ENCODE measurements at regions of chr16 and their contacts with region 1.

Region 1: DNA sequence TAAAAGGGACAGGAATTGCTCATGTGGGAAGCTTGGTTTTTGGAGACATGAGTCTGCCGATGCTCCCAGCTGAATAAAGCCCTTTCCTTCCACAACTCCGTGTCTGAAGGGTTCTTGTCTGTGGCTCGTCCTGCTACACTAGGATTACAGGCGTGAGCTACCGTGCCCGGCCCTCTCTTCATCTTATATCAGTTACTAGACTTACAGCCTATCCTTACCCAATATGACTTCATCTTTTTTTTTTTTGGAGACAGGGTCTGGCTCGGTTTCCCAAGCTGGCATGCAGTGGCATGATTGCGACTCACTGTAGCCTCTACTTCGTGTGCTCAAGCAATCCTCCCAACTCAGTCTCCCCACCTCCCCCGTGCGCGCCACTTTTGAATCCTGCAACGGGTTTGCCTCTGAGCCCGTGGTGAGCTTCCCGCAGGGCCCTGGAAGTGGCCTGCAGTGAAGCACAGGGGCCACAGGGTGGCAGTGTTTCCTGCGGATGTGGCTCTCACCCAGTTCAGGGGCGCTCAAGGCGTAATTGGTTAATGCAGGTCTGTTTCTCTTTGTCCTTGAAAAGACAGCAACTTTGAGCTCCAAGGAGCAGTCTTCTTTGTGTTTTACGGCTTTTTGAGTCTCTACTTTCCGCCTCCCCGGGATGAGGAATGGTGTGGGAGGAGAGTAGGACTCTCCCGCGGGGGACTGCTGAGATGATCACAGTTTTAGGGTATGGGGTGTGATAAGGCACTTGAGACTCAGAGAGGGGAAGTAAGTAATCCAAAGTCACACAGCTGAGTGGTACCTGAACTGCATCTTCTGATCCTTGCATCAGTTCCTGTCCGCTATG is 22.7 kb upstream of the GPRC5B start:
- DNase-seq: peak; percentile 70
- ATAC-seq: peak; percentile 95

Region 2: DNA sequence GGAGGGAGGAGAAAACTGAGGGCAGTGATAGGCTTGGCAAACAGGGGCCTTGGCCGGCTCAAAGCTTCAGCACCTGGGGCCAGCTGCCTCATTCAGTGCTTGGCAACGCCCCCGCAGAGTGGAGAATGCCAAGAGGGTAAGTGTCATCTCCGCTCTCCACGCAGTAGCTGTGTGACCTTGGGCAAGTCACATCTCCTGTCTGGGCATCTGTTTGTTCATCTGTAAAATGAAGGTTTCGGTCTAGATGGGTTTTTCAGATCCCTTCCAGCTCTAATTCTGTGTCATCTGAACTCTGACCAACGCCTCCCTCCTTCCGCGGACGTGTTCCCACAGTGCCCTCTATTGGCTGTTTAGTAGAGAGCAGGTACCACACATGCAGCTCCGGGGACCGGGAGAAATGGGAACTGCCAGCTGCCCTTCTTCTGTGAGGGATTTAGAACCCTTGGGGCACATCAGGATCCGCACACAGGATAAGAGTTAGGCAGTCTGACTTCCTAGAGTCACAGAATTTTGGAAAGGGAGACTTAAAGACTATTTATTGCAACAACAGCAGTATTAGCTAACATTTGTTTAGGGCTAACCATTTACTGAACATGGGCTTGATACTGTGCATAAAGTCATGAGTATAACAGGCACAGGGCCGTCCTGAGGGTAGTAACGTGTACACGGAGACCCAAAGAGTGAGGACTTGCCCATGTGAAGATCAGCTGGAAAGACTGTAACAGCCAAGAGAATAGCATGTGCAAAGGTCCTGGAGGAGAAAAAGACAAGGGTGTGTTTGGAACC is 393.1 kb after region 1 on chr16:
- intact Hi-C with region 1: loop called (anchors 5 kb)
- DNase-seq: peak; percentile 50
- ATAC-seq: peak; percentile 55

Region 3: DNA sequence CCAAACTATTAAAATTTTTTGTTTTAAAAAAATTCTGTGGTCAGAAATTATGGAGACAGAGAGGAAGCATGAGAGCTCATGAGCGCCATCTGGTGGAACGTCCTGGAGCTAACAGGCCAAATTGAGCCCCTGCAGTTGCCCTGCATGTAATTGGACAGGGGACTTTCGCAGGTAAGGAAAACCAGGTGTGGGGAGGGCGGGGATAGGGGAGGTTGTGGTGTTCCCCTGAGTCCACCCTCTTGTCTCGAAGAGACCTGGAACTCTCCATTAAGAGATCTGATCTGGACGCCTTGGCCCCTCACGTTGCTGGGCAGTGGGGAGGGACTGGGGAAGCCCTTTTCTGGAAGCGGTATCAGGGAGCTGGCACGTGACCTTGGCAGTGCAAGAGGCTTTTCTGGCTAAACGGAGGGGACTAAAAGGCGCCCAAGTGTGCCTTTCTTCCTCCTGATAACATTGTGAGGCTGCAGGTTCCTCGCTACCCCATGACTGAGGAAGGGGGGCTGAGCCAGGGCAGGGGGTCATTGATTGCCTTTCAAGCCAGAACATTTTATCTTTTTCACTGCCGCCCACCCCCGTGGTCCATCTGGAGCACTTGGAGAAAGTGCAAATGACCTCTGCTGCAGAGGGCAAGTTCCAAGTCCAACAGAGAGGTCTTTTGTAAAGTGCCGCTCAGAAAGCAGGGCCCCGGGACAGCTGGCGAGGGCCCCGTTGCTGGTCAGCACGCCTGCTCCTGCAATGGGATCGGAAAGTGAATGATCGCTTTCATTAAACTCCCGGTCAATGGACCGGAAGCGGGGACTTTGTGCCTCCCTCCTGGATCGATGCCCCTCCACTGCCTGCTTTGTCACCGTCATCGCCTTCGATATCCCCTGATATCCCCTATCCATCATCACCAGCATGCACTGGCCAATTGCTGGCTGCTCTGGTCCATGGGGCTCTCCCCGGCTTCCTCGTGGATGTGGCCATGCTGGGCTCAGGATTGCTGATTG is 478.8 kb after region 1 on chr16:
- intact Hi-C with region 1: loop called (anchors 5 kb)
- DNase-seq: peak; percentile 77
- ATAC-seq: peak; percentile 74

Measured in Right ventricle myocardium superior (tissue), 1 donor.